ENCODE measurements at regions of chr14 and their contacts with region 1.

Region 1: DNA sequence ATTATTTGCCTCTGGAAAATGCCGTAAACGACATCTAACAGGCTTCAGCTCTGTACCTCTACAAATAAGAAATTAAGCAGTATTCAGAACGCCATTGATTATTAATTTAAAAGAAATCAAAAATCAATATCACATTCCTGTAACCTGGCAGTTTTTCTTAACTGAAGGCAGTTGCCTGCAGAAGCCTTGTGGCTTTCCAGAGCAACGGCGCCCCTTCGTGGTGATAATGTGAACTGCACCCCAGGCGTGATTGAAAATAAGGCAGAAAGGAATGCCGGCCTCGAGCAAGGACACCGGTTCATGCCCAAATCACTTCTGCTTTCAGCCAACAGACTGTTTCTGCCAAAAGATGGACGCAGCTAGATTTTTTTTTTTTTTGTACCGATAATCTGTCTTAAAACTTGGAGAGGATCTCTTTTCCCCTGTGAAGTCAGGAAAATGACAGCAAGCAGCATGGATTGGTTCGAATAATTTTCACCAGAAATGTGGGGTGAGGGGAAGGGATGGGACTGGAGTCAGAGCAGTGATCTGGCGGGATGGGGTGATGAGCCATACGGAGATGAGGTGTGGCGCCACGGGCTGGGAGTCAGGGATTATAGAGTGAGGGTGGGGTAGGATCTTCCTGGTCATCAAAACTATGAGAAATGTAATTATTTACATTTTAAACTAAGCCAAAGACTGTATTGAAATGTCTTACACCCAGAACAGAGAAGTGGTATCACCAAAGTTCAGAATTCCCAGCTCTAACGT is 473.0 kb downstream of the DPF3 start:
- DNase-seq: peak; percentile 89

Region 2: DNA sequence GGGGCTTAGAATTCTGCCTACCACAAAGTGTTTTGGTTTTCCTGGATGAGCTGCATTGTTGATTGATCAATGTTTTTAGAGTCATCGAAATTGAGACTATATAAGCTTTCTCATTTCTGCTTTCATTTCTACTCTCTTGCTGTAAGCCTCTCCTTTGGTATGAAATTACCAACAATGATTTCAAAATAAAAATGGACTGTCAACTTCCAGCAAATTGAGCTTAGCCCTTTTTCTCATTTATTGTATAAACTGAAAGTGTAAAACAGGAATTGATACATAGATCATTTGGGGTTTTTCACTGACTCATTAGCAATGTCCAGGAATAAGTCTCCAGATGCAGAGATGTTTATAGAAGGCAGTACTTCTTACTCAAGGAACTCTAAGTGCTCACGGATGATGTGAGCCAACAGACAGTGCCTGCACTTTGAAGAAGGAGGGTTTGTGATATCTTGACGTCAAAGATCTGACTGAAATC is 1533.7 kb before region 1 on chr14:
- intact Hi-C with region 1: loop called in 1 of 2 experiments (anchors 10 kb)
- DNase-seq: no peak

Region 3: DNA sequence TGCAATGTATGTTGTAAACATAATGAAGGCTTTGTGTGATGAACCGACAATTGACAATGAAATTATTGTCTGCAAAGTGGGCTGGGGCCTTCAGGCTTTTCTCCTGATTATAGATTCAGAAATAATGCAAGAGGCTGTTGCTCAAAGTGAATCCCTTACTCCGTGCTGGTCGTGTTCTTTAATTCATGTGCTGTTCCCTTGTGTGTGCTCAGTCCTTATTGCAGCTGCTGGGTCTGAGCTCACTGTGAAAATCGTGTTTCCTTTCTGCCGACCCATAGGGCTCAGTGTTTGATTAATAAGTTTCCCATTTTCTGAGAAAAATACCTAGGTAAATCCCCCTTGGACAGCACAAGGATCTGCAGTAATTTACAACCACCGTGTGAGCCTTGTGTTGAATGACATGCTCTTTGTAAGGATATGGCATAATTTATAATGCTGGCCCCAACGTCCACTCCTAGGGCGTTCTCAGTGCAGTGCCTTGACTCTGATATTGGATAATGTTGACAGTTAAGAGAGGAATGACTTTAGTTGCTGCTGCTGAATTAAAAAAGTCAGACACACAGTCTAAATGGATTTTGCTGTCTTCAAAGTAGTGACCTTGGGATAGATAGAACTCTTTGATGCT is 407.1 kb before region 1 on chr14:
- intact Hi-C with region 1: no loop called
- DNase-seq: no peak

Region 4: GRCh38 chr14:72401632-72402376 is 19.1 kb before region 1 on chr14:
- intact Hi-C with region 1: no loop called
- DNase-seq: no peak